Activated naive CD4-positive, alpha-beta T cell treated with anti-CD3 and anti-CD28 coated beads for 36 hours (primary cell): ENCODE measurements at regions of chr7 and their contacts with region 1.

Region 1: DNA sequence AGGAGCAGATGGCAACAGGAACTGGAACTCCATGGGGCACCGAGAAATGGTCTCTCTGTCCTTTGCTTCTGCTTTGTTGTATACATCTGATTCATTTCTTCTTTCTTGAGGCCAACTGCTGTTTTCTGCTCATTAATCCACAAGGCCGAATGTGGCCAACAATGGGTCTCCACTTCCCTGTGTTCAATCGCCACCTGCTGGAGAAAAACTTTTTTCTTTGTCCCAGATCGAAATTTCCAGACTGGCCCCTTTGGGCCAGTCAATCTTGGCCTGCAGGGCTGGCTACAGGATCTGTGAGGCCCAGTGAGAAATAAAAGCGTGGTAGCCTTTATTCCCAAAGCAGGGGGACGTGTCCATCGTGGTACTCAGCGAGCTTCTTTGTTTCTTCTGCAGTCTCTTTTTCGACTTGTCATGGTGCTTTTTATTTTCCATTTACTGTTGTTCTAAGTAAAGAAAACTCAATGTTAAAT is 58.8 kb downstream of the PARP12 start:
- DNase-seq: peak; percentile 40
- H3K4me3 Mint-ChIP-seq: no peak overlapping the region
- H3K27ac Mint-ChIP-seq: no peak overlapping the region
- H3K4me1 Mint-ChIP-seq: no peaks in the 10 kb centered on the region
- H3K27me3 Mint-ChIP-seq: no peaks in the 10 kb centered on the region

Region 2: GRCh38 chr7:139431010-139431409 is 572.9 kb before region 1 on chr7:
- CTCF ChIA-PET with region 1: no interaction called
- intact Hi-C with region 1: loop called (anchors 5 kb)
- DNase-seq: no peak
- H3K4me3 Mint-ChIP-seq: no peak overlapping the region
- H3K27ac Mint-ChIP-seq: no peak overlapping the region
- H3K4me1 Mint-ChIP-seq: peaks cover 5% of the 10 kb centered on the region
- H3K27me3 Mint-ChIP-seq: no peaks in the 10 kb centered on the region

Region 3: DNA sequence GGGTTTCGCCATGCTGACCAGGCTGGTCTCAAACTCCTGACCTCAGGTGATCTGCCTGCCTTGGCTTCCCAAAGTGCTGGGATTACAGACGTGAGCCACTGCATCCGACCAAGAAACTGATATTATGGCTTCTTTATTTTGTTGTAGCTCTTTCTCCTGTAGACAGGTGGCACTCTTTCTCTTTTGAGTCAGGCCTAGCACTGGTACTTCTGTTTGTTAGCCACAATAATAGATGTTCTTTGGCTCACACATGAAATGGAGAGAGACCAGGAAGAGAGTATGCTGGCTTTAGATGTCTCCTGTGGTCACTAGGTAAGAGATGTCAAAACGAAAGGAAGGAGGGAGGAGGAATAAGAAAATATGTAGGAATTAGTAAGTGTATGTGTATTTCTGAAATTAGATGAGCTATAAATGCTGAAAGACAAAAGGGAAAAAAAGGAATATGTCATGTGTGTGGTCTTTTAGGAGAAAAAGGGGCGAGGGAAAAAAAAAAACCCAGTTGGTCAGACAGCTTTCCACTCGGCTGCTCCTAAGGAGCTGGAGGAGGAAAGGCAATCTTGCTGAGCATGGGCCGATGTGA is 401.7 kb before region 1 on chr7:
- CTCF ChIA-PET with region 1: interaction called, 48 read pairs
- intact Hi-C with region 1: loop called (anchors 1 kb)
- DNase-seq: no peak
- H3K4me3 Mint-ChIP-seq: no peak overlapping the region
- H3K27ac Mint-ChIP-seq: no peak overlapping the region
- H3K4me1 Mint-ChIP-seq: no peaks in the 10 kb centered on the region
- H3K27me3 Mint-ChIP-seq: no peaks in the 10 kb centered on the region

Region 4: DNA sequence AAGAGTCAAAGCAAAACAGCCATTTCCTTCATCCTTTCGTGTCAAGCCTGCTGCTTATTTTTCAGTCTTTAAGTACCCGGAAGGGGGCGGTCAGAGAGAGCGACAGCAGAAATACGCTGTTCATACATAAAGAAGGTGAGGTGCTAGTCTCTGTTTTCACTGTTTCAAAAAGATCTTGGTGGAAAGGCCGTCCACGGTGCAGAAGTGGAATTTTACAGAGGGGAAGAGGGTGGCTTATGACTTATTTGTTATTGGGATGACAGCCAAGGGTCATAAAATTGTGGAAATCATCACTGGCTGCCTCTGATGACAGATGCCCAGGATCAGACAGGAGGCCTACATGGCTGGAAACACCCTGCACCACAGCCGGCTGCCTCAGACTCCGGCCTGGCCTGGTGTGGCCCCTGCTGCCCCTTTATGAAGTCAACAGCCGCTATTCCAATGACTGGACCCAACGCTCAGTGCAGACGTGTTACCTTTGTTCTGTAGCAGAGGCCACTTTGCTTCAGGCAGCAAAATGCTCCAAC is 283.2 kb before region 1 on chr7:
- CTCF ChIA-PET with region 1: no interaction called
- intact Hi-C with region 1: loop called (anchors 5 kb)
- DNase-seq: peak; percentile 39
- H3K4me3 Mint-ChIP-seq: no peak overlapping the region
- H3K27ac Mint-ChIP-seq: no peak overlapping the region
- H3K4me1 Mint-ChIP-seq: peaks cover 18% of the 10 kb centered on the region
- H3K27me3 Mint-ChIP-seq: no peaks in the 10 kb centered on the region

Region 5: DNA sequence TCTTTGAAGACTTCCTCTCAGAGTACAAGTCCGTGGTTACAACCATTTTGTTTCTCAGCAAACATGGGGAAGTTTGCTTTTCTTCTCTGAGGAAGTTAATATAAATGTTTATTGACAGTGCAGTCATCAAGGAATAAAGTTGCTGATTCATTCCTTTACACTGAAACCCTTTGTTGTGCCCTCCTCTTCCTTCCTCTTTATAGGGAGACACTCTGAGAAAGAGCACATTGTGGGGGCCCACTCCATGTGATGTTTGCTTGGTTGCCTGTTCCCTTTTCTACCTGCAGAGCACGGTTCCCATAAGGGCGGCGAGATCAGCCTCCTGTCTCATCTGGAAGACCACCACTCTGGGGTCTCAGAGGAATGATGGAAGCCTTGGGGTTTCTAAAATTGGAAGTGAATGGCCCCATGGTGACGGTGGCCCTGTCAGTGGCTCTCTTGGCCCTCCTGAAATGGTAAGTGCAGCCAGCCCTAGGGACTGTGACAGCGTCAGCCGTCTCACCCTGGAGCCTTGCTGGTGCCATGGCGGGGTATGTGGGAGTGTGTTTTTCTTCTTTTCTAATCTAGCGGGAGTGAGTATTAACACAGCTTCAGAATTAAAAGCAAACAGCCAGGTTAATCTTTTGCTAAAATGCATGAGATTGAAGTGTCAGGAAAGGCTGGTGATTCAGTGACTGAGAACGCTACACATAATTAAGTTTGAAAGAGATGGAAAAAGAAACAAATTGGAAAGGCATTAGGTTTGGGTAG is 174.7 kb before region 1 on chr7 and contains the start of gene TBXAS1:
- CTCF ChIA-PET with region 1: interaction called, 7 read pairs
- intact Hi-C with region 1: loop called (anchors 5 kb)
- DNase-seq: peak; percentile 14
- H3K4me3 Mint-ChIP-seq: peak within 1 kb of the TSS; percentile 50
- H3K27ac Mint-ChIP-seq: peak within 1 kb of the TSS; percentile 77
- H3K4me1 Mint-ChIP-seq: peaks cover 24% of the 10 kb centered on the region
- H3K27me3 Mint-ChIP-seq: peaks cover 4% of the 10 kb centered on the region
- total RNA-seq, gene TBXAS1: 0.83 to 1.1 TPM

Region 6: GRCh38 chr7:140326116-140326928 is 322.4 kb after region 1 on chr7:
- CTCF ChIA-PET with region 1: interaction called, 4 read pairs
- intact Hi-C with region 1: loop called (anchors 1 kb)
- DNase-seq: peak; percentile 76
- H3K4me3 Mint-ChIP-seq: no peak overlapping the region
- H3K27ac Mint-ChIP-seq: no peak overlapping the region
- H3K4me1 Mint-ChIP-seq: no peaks in the 10 kb centered on the region
- H3K27me3 Mint-ChIP-seq: no peaks in the 10 kb centered on the region